Activated CD4-positive, alpha-beta memory T cell treated with anti-CD3 and anti-CD28 coated beads, Interleukin-2, amount 10 ng/mL, durations not matched to agents 7 days and 5 days (primary cell): ENCODE measurements at regions of chr16 and their contacts with region 1.

Region 1: GRCh38 chr16:74666425-74667254 is at the start of gene RFWD3:
- DNase-seq: peak; percentile 98
- H3K4me3 Mint-ChIP-seq: peak within 1 kb of the TSS; percentile 94
- H3K27ac Mint-ChIP-seq: peak within 1 kb of the TSS; percentile 96
- H3K4me1 Mint-ChIP-seq: peaks cover 45% of the 10 kb centered on the region
- H3K27me3 Mint-ChIP-seq: no peaks in the 10 kb centered on the region
- total RNA-seq, gene RFWD3: 99.5 to 107 TPM

Region 2: GRCh38 chr16:74275002-74275636 is 391.5 kb before region 1 on chr16:
- CTCF ChIA-PET with region 1: no interaction called
- POLR2A ChIA-PET with region 1: no interaction called
- DNase-seq: no peak
- H3K4me3 Mint-ChIP-seq: no peak overlapping the region
- H3K27ac Mint-ChIP-seq: no peak overlapping the region
- H3K4me1 Mint-ChIP-seq: peaks cover 6% of the 10 kb centered on the region
- H3K27me3 Mint-ChIP-seq: peaks cover 23% of the 10 kb centered on the region

Region 3: GRCh38 chr16:74296432-74297144 is 370.1 kb before region 1 on chr16 and contains the start of gene PSMD7:
- CTCF ChIA-PET with region 1: no interaction called
- POLR2A ChIA-PET with region 1: interaction called, 37 read pairs
- DNase-seq: peak; percentile 92
- H3K4me3 Mint-ChIP-seq: peak within 1 kb of the TSS; percentile 87
- H3K27ac Mint-ChIP-seq: peak within 1 kb of the TSS; percentile 90
- H3K4me1 Mint-ChIP-seq: peaks cover 44% of the 10 kb centered on the region
- H3K27me3 Mint-ChIP-seq: no peaks in the 10 kb centered on the region
- total RNA-seq, gene PSMD7: 95.0 to 97.6 TPM

Region 4: DNA sequence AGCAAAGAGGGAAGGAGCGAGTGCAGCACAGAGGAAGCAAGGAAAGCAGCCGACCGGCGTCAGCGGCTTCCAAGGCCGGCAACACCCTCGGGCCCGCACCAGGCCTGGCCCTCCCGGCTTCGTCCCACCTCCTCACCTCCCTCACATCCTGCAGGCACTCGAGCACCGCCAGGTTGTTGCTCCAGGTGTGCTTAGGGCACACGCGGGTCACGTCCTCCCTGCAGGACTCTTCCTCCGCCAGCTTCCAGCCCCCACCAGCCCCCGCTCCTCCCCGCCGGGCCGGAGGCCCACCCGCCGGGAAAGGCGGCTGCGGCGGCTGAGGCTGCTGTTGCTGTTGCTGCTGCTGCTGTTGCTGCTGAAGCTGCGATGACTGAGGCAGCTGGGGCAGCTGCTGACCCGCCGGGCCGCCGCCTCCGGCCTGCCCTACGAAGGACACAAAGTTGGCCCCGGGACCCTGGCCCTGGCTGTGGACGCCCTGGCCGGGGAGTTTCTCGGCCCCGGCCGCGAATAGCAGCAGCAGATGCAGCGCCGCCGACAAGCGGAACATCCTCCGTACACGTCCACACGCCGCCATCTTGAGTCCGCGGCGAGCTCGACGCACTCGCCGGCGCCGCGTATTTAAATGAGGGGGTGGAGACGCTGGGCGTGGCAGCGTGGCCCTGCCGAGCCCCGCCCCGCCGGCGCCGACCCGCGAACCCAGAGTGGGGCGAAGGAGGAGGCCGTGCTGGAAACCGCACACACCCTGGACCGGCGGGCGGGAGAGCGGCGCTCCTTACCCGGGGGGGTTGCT is 59.9 kb before region 1 on chr16 and contains the start of gene GLG1:
- CTCF ChIA-PET with region 1: no interaction called
- POLR2A ChIA-PET with region 1: interaction called, 41 read pairs
- DNase-seq: peak; percentile 92
- H3K4me3 Mint-ChIP-seq: peak within 1 kb of the TSS; percentile 92
- H3K27ac Mint-ChIP-seq: peak within 1 kb of the TSS; percentile 86
- H3K4me1 Mint-ChIP-seq: peaks cover 62% of the 10 kb centered on the region
- H3K27me3 Mint-ChIP-seq: no peaks in the 10 kb centered on the region
- total RNA-seq, gene GLG1: 130 to 132 TPM

Region 5: GRCh38 chr16:74679983-74680382 is 13.3 kb after region 1 on chr16:
- CTCF ChIA-PET with region 1: interaction called, 4 read pairs
- POLR2A ChIA-PET with region 1: interaction called, 37 read pairs
- DNase-seq: no peak
- H3K4me3 Mint-ChIP-seq: no peak overlapping the region
- H3K27ac Mint-ChIP-seq: peak overlapping the region; percentile 11
- H3K4me1 Mint-ChIP-seq: no peaks in the 10 kb centered on the region
- H3K27me3 Mint-ChIP-seq: no peaks in the 10 kb centered on the region

Region 6: GRCh38 chr16:74984535-74985296 is 318.1 kb after region 1 on chr16 and contains the start of gene WDR59:
- CTCF ChIA-PET with region 1: no interaction called
- POLR2A ChIA-PET with region 1: interaction called, 11 read pairs
- DNase-seq: peak; percentile 99
- H3K4me3 Mint-ChIP-seq: peak within 1 kb of the TSS; percentile 99
- H3K27ac Mint-ChIP-seq: peak within 1 kb of the TSS; percentile 86
- H3K4me1 Mint-ChIP-seq: peaks cover 25% of the 10 kb centered on the region
- H3K27me3 Mint-ChIP-seq: no peaks in the 10 kb centered on the region
- total RNA-seq, gene WDR59: 67.1 to 72.3 TPM